HepG2 (cell line): ENCODE measurements at regions of chr7 and their contacts with region 1.

Region 1: GRCh38 chr7:122132341-122132740 is 11.7 kb downstream of the AASS start:
- DNase-seq: no peak
- ATAC-seq: no peak
- H3K4me3 ChIP-seq: no peak overlapping the region
- H3K27ac ChIP-seq: no peak overlapping the region
- H3K4me1 ChIP-seq: peaks cover 12% of the 10 kb centered on the region
- H3K27me3 ChIP-seq: no peaks in the 10 kb centered on the region
- CTCF ChIP-seq: no peak
- EP300 ChIP-seq: no peak
- POLR2A ChIP-seq: no peak
- RAD21 ChIP-seq: no peak

Region 2: DNA sequence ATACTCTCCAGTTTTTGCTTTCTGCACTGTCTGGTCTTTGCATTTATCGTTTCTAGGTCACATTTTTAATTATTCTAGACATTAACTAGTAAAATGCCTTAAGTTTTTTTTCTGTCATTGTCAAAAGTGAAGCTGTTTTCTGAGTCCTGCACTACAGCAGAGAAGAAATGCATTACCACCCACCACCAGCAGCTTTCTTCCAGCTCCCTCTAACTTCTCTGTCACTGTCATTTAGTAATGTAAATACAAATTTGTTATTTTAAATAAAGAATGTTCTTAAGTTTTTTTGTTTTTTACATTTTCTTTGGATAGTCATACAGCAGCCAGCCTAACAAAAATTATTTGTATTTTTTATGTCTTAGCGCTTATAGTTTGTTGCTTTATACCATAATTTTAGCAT is 240.6 kb before region 1 on chr7:
- CTCF ChIA-PET with region 1: no interaction called
- POLR2A ChIA-PET with region 1: no interaction called
- in situ Hi-C with region 1: no loop called
- intact Hi-C with region 1: no loop called
- DNase-seq: no peak
- ATAC-seq: no peak
- H3K4me3 ChIP-seq: no peak overlapping the region
- H3K27ac ChIP-seq: no peak overlapping the region
- H3K4me1 ChIP-seq: no peaks in the 10 kb centered on the region
- H3K27me3 ChIP-seq: no peaks in the 10 kb centered on the region
- CTCF ChIP-seq: no peak
- EP300 ChIP-seq: no peak
- POLR2A ChIP-seq: no peak
- RAD21 ChIP-seq: no peak

Region 3: GRCh38 chr7:121954803-121955202 is 177.5 kb before region 1 on chr7:
- CTCF ChIA-PET with region 1: no interaction called
- POLR2A ChIA-PET with region 1: no interaction called
- in situ Hi-C with region 1: no loop called
- intact Hi-C with region 1: no loop called
- DNase-seq: no peak
- ATAC-seq: no peak
- H3K4me3 ChIP-seq: no peak overlapping the region
- H3K27ac ChIP-seq: no peak overlapping the region
- H3K4me1 ChIP-seq: no peaks in the 10 kb centered on the region
- H3K27me3 ChIP-seq: no peaks in the 10 kb centered on the region
- CTCF ChIP-seq: no peak
- EP300 ChIP-seq: no peak
- POLR2A ChIP-seq: no peak
- RAD21 ChIP-seq: no peak

Region 4: GRCh38 chr7:122092964-122093797 is 39.2 kb before region 1 on chr7:
- CTCF ChIA-PET with region 1: no interaction called
- POLR2A ChIA-PET with region 1: no interaction called
- in situ Hi-C with region 1: no loop called
- intact Hi-C with region 1: loop called (anchors 5 kb)
- DNase-seq: peak; percentile 64
- ATAC-seq: peak; percentile 83
- H3K4me3 ChIP-seq: no peak overlapping the region
- H3K27ac ChIP-seq: no peak overlapping the region
- H3K4me1 ChIP-seq: no peaks in the 10 kb centered on the region
- H3K27me3 ChIP-seq: no peaks in the 10 kb centered on the region
- CTCF ChIP-seq: peak; percentile 75
- EP300 ChIP-seq: no peak
- POLR2A ChIP-seq: no peak
- RAD21 ChIP-seq: no peak

Region 5: GRCh38 chr7:122268101-122268500 is 135.8 kb after region 1 on chr7:
- CTCF ChIA-PET with region 1: no interaction called
- POLR2A ChIA-PET with region 1: no interaction called
- in situ Hi-C with region 1: no loop called
- intact Hi-C with region 1: no loop called
- DNase-seq: no peak
- ATAC-seq: no peak
- H3K4me3 ChIP-seq: no peak overlapping the region
- H3K27ac ChIP-seq: no peak overlapping the region
- H3K4me1 ChIP-seq: no peaks in the 10 kb centered on the region
- H3K27me3 ChIP-seq: no peaks in the 10 kb centered on the region; a peak in 2 of 5 replicates
- CTCF ChIP-seq: no peak
- EP300 ChIP-seq: no peak
- POLR2A ChIP-seq: no peak
- RAD21 ChIP-seq: no peak

Region 6: DNA sequence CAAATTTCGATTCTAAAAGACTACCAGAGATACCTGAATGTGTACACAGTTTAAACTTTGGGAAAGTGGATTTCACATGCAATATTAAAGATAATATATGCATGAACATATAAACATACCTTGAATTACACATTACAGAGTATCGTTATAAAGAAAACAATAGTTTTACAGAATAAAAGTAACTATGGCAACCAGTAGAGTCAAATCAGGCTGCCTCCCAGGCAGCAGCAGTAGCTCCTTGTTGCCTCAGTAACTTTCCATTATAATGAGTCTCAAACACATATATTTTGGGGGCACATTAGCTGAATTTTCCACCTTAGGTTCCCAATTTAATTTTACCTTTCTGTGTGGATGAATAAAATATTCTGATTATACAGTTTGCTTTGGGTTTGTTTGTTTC is 336.6 kb after region 1 on chr7:
- CTCF ChIA-PET with region 1: no interaction called
- POLR2A ChIA-PET with region 1: no interaction called
- in situ Hi-C with region 1: no loop called
- intact Hi-C with region 1: no loop called
- DNase-seq: no peak
- ATAC-seq: no peak
- H3K4me3 ChIP-seq: no peak overlapping the region
- H3K27ac ChIP-seq: no peak overlapping the region
- H3K4me1 ChIP-seq: no peaks in the 10 kb centered on the region
- H3K27me3 ChIP-seq: no peaks in the 10 kb centered on the region
- CTCF ChIP-seq: no peak
- EP300 ChIP-seq: no peak
- POLR2A ChIP-seq: no peak
- RAD21 ChIP-seq: no peak